Endothelial cell of umbilical vein (primary cell): ENCODE measurements at regions of chr11 and their contacts with region 1.

Region 1: DNA sequence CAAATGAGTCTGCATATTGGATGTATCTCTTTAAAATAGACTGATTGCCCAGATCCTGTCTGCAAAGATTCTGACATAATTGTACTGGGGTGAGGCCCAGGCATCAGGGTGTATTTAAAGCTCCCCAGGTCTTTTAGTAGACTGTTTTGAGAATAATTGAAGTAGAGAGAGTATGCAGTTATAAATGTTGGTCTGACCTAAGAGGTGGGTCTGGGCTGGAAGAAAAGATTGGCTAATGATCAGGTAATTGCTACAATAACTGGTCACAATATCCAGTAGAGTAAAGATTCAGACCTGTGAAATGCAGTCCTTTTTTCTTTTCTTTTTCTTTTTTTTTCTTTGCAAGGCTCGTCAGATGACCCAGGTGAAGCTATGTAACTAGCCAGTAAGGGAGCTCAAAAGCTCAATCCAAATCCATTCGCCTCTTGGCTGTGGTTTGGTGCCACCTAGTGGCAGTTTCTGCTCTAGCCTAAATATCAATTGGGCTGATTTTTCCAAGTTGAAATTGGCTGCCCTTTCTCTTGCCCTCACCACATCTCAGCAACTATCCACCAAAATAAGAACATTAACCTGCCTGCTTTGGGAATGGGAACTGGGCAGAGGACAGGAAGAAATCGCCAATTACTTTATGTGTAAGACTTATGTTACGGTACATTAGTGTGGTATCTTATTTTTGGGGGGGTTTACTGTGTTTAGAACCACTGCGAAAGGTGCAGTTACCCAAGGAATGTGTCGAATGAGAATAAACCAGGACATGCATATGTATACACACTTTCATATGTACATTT is 45.9 kb downstream of the ZNF143 start:
- DNase-seq: peak; percentile 84
- H3K4me3 ChIP-seq: no peak overlapping the region
- H3K27ac ChIP-seq: no peak overlapping the region
- H3K4me1 ChIP-seq: no peaks in the 10 kb centered on the region
- H3K27me3 ChIP-seq: no peaks in the 10 kb centered on the region
- CTCF ChIP-seq: peak; percentile 69 to 88
- POLR2A ChIP-seq: no peak

Region 2: GRCh38 chr11:9015677-9016076 is 491.0 kb before region 1 on chr11:
- CTCF ChIA-PET with region 1: interaction called, 101 read pairs
- POLR2A ChIA-PET with region 1: no interaction called
- dilution Hi-C with region 1: no loop called
- intact Hi-C with region 1: loop called (anchors 1 kb)
- DNase-seq: peak; percentile 81
- H3K4me3 ChIP-seq: no peak overlapping the region
- H3K27ac ChIP-seq: no peak overlapping the region
- H3K4me1 ChIP-seq: peaks cover 13% of the 10 kb centered on the region
- H3K27me3 ChIP-seq: peaks cover 0 to 6% of the 10 kb centered on the region in 2 experiments
- CTCF ChIP-seq: peak; percentile 80 to 85
- POLR2A ChIP-seq: no peak

Region 3: GRCh38 chr11:9170450-9170849 is 336.2 kb before region 1 on chr11:
- CTCF ChIA-PET with region 1: interaction called, 35 read pairs
- POLR2A ChIA-PET with region 1: no interaction called
- dilution Hi-C with region 1: no loop called
- intact Hi-C with region 1: loop called (anchors 2 kb)
- DNase-seq: peak; percentile 17
- H3K4me3 ChIP-seq: no peak overlapping the region
- H3K27ac ChIP-seq: no peak overlapping the region
- H3K4me1 ChIP-seq: peaks cover 14% of the 10 kb centered on the region
- H3K27me3 ChIP-seq: no peaks in the 10 kb centered on the region
- CTCF ChIP-seq: no peak
- POLR2A ChIP-seq: no peak

Region 4: GRCh38 chr11:9473408-9473807 is 33.3 kb before region 1 on chr11:
- CTCF ChIA-PET with region 1: interaction called, 15 read pairs
- POLR2A ChIA-PET with region 1: no interaction called
- dilution Hi-C with region 1: no loop called
- intact Hi-C with region 1: no loop called
- DNase-seq: no peak
- H3K4me3 ChIP-seq: no peak overlapping the region
- H3K27ac ChIP-seq: no peak overlapping the region
- H3K4me1 ChIP-seq: no peaks in the 10 kb centered on the region
- H3K27me3 ChIP-seq: no peaks in the 10 kb centered on the region
- CTCF ChIP-seq: no peak
- POLR2A ChIP-seq: no peak

Region 5: DNA sequence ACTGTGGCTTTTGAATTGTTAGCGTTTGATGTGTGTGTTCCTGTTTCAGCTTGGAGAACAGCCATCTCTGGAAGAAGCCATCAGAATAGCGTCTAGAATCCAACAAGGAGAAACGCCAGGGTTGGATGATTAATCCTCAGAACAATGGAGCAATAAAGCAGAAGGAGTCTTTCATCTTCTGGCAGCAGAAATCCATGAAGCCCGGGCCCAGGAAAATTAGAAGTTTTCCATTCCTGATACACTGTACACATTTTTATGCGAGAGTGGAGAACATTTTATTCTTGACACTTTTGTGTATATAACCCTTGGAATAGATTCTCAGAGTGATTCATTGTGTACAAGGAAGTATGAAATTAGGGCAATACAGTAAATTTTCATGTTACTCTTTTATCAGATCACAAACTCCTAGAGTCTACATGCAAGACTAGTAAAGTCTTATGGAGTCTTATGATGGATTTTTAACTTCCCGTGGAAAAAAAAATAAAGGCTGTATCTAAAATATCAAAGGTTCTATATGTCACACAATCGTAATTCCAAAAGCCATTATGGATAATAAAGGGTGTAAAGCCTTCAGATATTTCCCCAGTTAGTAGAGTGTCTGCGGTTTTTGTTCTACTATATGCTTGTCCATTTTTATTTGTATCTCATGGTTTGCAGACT is 20.9 kb after region 1 on chr11:
- CTCF ChIA-PET with region 1: interaction called, 10 read pairs
- POLR2A ChIA-PET with region 1: no interaction called
- dilution Hi-C with region 1: no loop called
- intact Hi-C with region 1: no loop called
- DNase-seq: peak; percentile 96
- H3K4me3 ChIP-seq: peak overlapping the region in 1 of 3 experiments; percentile 20
- H3K27ac ChIP-seq: peak overlapping the region; percentile 82
- H3K4me1 ChIP-seq: peaks cover 27% of the 10 kb centered on the region
- H3K27me3 ChIP-seq: no peaks in the 10 kb centered on the region
- CTCF ChIP-seq: no peak
- POLR2A ChIP-seq: peak; percentile 21

Region 6: DNA sequence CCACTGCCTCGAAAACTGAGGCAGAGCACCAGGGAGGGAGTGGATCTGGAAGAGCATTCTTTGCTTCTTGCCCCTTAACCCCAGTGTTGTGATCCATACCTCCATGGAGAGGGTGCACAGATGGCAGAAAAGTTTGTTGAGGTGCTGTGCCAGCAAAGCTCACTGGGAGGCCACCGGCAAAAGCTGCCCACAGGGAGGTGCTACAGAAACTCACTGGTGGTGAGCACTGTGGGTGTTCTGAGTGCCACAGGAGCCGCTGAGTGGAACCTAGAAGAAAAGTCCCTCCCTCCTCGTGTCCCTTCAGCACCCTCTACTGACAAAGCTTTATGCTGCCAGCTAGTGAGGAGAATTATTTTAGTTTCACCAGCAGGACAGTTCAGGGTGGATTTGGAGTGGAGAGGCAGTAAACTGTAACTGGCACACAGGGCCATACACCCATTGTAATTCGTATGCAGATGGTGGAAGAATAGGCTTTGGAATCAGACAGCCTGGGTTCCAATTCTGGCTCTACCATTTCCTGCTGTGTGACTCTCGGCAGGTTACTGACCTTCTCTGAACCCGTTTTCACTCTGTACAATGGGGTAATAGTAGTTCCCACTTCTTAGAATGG is 241.8 kb after region 1 on chr11:
- CTCF ChIA-PET with region 1: interaction called, 13 read pairs
- POLR2A ChIA-PET with region 1: interaction called, 3 read pairs
- dilution Hi-C with region 1: no loop called
- intact Hi-C with region 1: no loop called
- DNase-seq: peak; percentile 81
- H3K4me3 ChIP-seq: no peak overlapping the region
- H3K27ac ChIP-seq: no peak overlapping the region
- H3K4me1 ChIP-seq: peaks cover 16% of the 10 kb centered on the region
- H3K27me3 ChIP-seq: no peaks in the 10 kb centered on the region
- CTCF ChIP-seq: peak; percentile 60 to 66
- POLR2A ChIP-seq: peak; percentile 1